CD8-positive, alpha-beta T cell (primary cell): ENCODE measurements at regions of chr17 and their contacts with region 1.

Region 1: DNA sequence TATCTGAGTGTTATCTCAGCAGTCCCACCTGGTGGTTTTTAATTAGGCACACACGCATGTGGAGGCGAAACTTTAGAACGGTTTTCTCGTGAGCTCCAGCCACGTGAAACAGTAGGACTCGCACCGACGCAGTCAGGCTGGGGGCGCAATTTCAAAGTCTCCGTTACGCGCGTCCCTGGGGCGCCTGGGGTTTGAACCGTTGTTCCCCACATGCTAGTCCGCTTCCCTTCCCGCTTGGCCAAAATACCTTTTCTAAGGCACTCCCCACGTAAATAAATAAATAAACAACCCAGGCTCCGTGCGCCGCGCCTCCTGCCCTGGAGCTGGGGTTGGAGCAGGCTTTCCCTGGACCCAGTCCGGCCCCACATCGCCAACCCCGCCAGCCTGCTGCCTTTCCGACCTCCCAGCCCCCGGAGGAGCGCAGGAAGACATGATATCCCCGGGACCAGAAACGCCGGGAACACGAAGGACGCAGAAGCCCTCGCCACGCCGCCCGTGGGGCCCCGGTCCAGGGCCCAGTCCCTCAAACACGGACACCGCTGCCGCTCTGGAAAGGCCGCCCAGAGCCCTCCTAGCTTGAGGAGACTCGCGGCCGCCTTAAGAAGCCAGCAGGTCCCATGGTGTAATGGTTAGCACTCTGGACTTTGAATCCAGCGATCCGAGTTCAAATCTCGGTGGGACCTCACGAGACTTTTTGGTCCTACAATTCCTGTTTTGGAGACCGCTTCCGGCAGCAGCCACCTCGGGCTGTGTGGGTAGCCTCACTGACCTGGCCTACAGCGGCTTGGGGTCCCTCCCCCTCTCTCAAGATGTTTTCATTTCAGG is 18.2 kb downstream of the GNGT2 start:
- DNase-seq: peak; percentile 86 to 99 (median 92)
- ATAC-seq: peak; percentile 48
- H3K4me3 ChIP-seq: peak overlapping the region; percentile 68 to 80
- H3K4me3 Mint-ChIP-seq: peak overlapping the region; percentile 97
- H3K27ac ChIP-seq: peak overlapping the region; percentile 82 to 93
- H3K27ac Mint-ChIP-seq: peak overlapping the region; percentile 100
- H3K4me1 ChIP-seq: peaks cover 11% of the 10 kb centered on the region
- H3K4me1 Mint-ChIP-seq: peaks cover 29% of the 10 kb centered on the region
- H3K27me3 ChIP-seq: no peaks in the 10 kb centered on the region
- H3K27me3 Mint-ChIP-seq: no peaks in the 10 kb centered on the region
- CTCF ChIP-seq: peak; percentile 46

Region 2: GRCh38 chr17:48441231-48441711 is 750.9 kb before region 1 on chr17:
- CTCF ChIA-PET with region 1: no interaction called
- POLR2A ChIA-PET with region 1: no interaction called
- intact Hi-C with region 1: loop called in 1 of 2 experiments (anchors 5 kb)
- DNase-seq: peak in 5 of 9 experiments; percentile 35 to 92 (median 50)
- ATAC-seq: peak; percentile 67
- H3K4me3 ChIP-seq: peak overlapping the region; percentile 0 to 32
- H3K4me3 Mint-ChIP-seq: peak overlapping the region; percentile 68
- H3K27ac ChIP-seq: peak overlapping the region; percentile 58 to 85
- H3K27ac Mint-ChIP-seq: peak overlapping the region; percentile 97
- H3K4me1 ChIP-seq: peaks cover 94% of the 10 kb centered on the region
- H3K4me1 Mint-ChIP-seq: peaks cover 94% of the 10 kb centered on the region
- H3K27me3 ChIP-seq: no peaks in the 10 kb centered on the region
- H3K27me3 Mint-ChIP-seq: no peaks in the 10 kb centered on the region
- CTCF ChIP-seq: no peak

Region 3: DNA sequence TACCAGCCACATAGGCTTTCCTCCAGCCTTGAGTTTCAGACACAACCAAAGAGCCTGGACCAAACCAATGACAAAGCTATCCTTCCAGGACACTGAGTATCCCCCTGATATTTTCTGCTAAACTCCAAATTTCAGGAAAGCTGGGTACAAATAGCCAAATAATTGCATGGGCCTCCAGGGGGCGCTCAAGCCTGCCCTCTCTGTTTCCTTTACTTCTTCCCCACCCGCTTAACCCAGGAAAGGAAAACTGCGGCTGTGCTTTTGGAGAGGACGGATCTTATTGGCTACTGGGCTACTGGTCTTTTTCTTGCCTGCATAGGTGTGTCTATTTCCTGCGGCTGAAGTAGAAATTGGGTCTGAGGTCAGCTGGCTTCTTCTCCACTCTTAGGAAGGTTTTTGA is 11.8 kb before region 1 on chr17:
- CTCF ChIA-PET with region 1: interaction called, 67 read pairs
- POLR2A ChIA-PET with region 1: interaction called, 4 read pairs
- intact Hi-C with region 1: loop called in 1 of 2 experiments (anchors 1 kb)
- DNase-seq: peak; percentile 39 to 82 (median 69)
- ATAC-seq: peak; percentile 42
- H3K4me3 ChIP-seq: no peak overlapping the region
- H3K4me3 Mint-ChIP-seq: no peak overlapping the region
- H3K27ac ChIP-seq: no peak overlapping the region
- H3K27ac Mint-ChIP-seq: no peak overlapping the region
- H3K4me1 ChIP-seq: no peaks in the 10 kb centered on the region
- H3K4me1 Mint-ChIP-seq: peaks cover 4% of the 10 kb centered on the region
- H3K27me3 ChIP-seq: peaks cover 0 to 3% of the 10 kb centered on the region in 2 experiments
- H3K27me3 Mint-ChIP-seq: no peaks in the 10 kb centered on the region
- CTCF ChIP-seq: peak; percentile 89

Region 4: GRCh38 chr17:49217651-49218413 is 25.7 kb after region 1 on chr17:
- CTCF ChIA-PET with region 1: interaction called, 21 read pairs
- POLR2A ChIA-PET with region 1: interaction called, 99 read pairs
- intact Hi-C with region 1: loop called (anchors 1 to 2 kb)
- DNase-seq: peak; percentile 60 to 96 (median 80)
- ATAC-seq: peak; percentile 76
- H3K4me3 ChIP-seq: peak overlapping the region; percentile 12 to 24
- H3K4me3 Mint-ChIP-seq: peak overlapping the region; percentile 81
- H3K27ac ChIP-seq: peak overlapping the region; percentile 49 to 80
- H3K27ac Mint-ChIP-seq: peak overlapping the region; percentile 95
- H3K4me1 ChIP-seq: peaks cover 77% of the 10 kb centered on the region
- H3K4me1 Mint-ChIP-seq: peaks cover 71% of the 10 kb centered on the region
- H3K27me3 ChIP-seq: no peaks in the 10 kb centered on the region
- H3K27me3 Mint-ChIP-seq: no peaks in the 10 kb centered on the region
- CTCF ChIP-seq: no peak

Region 5: GRCh38 chr17:49230636-49231562 is 38.8 kb after region 1 on chr17 and contains the start of gene PHOSPHO1:
- CTCF ChIA-PET with region 1: interaction called, 355 read pairs
- POLR2A ChIA-PET with region 1: interaction called, 73 read pairs
- intact Hi-C with region 1: loop called (anchors 1 kb)
- DNase-seq: peak; percentile 71 to 94 (median 88)
- ATAC-seq: peak; percentile 93
- H3K4me3 ChIP-seq: peak within 1 kb of the TSS; percentile 69 to 91
- H3K4me3 Mint-ChIP-seq: peak within 1 kb of the TSS; percentile 83
- H3K27ac ChIP-seq: no peak within 1 kb of the TSS
- H3K27ac Mint-ChIP-seq: peak within 1 kb of the TSS; percentile 19
- H3K4me1 ChIP-seq: peaks cover 24% of the 10 kb centered on the region
- H3K4me1 Mint-ChIP-seq: peaks cover 14% of the 10 kb centered on the region
- H3K27me3 ChIP-seq: no peaks in the 10 kb centered on the region
- H3K27me3 Mint-ChIP-seq: peaks cover 4% of the 10 kb centered on the region
- CTCF ChIP-seq: no peak
- total RNA-seq, gene PHOSPHO1: not detected

Region 6: GRCh38 chr17:49370971-49371834 is 179.1 kb after region 1 on chr17:
- CTCF ChIA-PET with region 1: no interaction called
- POLR2A ChIA-PET with region 1: no interaction called
- intact Hi-C with region 1: no loop called
- DNase-seq: no peak
- ATAC-seq: no peak
- H3K4me3 ChIP-seq: no peak overlapping the region
- H3K4me3 Mint-ChIP-seq: no peak overlapping the region
- H3K27ac ChIP-seq: no peak overlapping the region
- H3K27ac Mint-ChIP-seq: no peak overlapping the region
- H3K4me1 ChIP-seq: no peaks in the 10 kb centered on the region
- H3K4me1 Mint-ChIP-seq: peaks cover 12% of the 10 kb centered on the region
- H3K27me3 ChIP-seq: no peaks in the 10 kb centered on the region
- H3K27me3 Mint-ChIP-seq: no peaks in the 10 kb centered on the region
- CTCF ChIP-seq: no peak

Region 7: DNA sequence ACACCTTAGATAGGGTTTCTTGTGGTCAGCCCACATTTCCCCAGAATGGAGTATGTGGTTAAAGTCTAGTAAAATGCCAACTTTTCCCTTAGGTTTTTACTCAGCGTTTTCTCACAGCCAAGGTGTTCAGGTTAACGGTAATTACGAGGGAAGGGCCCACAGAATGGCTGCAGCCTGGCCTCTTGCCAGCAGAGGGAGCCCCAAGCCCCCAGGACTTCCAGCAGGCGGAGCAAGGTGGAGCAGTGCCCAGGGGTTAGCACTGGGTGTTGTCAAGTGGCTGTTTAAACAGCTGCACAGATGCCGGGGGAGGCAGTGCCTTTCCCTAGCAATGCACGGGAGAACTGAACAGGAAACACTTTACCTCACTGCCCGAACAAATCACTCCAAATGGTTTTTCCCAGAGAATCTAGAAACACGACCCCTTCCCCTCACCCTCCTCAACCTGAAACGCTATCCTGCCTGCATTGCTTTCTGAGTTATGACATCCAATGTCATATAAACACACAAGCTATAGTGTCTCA is 215.9 kb after region 1 on chr17:
- CTCF ChIA-PET with region 1: no interaction called
- POLR2A ChIA-PET with region 1: no interaction called
- intact Hi-C with region 1: loop called (anchors 5 kb)
- DNase-seq: peak; percentile 76 to 90 (median 85)
- ATAC-seq: peak; percentile 97
- H3K4me3 ChIP-seq: no peak overlapping the region
- H3K4me3 Mint-ChIP-seq: no peak overlapping the region
- H3K27ac ChIP-seq: peak overlapping the region in 1 of 2 experiments; percentile 1
- H3K27ac Mint-ChIP-seq: peak overlapping the region; percentile 17
- H3K4me1 ChIP-seq: peaks cover 27% of the 10 kb centered on the region
- H3K4me1 Mint-ChIP-seq: peaks cover 36% of the 10 kb centered on the region
- H3K27me3 ChIP-seq: no peaks in the 10 kb centered on the region
- H3K27me3 Mint-ChIP-seq: no peaks in the 10 kb centered on the region
- CTCF ChIP-seq: peak; percentile 94

Region 8: DNA sequence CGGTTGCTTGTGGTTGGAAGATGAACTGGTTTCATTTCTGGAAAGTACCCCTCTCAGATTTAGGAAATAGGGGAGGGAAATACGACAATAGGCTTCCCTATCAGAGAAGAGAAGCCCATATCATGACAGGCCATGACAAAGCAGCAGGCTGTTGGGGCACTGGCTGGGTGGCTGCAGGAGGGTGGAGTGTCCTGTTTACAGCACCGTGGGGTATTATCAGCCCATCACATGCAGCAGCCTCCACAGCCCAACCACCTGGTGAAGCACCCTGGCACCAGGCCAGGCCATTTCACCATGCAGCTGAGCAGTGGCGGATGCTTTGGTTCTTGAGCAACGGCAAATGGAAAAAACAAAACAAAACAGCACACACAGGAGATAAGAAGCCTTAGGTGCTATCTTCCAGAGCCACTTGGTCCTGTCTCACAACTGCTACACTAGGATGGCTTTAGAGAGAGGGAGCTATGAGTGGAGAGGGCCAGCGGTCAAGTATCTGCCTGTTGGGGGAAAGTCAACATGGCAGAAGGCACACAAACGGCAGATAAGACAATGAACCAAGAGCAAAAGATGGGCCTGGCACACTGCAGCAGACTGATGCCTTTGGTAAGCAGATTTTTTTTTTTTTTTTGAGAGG is 547.6 kb after region 1 on chr17:
- CTCF ChIA-PET with region 1: no interaction called
- POLR2A ChIA-PET with region 1: no interaction called
- intact Hi-C with region 1: loop called in 1 of 2 experiments (anchors 10 kb)
- DNase-seq: peak; percentile 91 to 99 (median 98)
- ATAC-seq: peak; percentile 95
- H3K4me3 ChIP-seq: peak overlapping the region; percentile 42 to 54
- H3K4me3 Mint-ChIP-seq: peak overlapping the region; percentile 90
- H3K27ac ChIP-seq: peak overlapping the region; percentile 77 to 96
- H3K27ac Mint-ChIP-seq: peak overlapping the region; percentile 100
- H3K4me1 ChIP-seq: peaks cover 83% of the 10 kb centered on the region
- H3K4me1 Mint-ChIP-seq: peaks cover 87% of the 10 kb centered on the region
- H3K27me3 ChIP-seq: no peaks in the 10 kb centered on the region
- H3K27me3 Mint-ChIP-seq: no peaks in the 10 kb centered on the region
- CTCF ChIP-seq: no peak